Endothelial cell of umbilical vein (primary cell): ENCODE measurements at regions of chr6 and their contacts with region 1.

Region 1: DNA sequence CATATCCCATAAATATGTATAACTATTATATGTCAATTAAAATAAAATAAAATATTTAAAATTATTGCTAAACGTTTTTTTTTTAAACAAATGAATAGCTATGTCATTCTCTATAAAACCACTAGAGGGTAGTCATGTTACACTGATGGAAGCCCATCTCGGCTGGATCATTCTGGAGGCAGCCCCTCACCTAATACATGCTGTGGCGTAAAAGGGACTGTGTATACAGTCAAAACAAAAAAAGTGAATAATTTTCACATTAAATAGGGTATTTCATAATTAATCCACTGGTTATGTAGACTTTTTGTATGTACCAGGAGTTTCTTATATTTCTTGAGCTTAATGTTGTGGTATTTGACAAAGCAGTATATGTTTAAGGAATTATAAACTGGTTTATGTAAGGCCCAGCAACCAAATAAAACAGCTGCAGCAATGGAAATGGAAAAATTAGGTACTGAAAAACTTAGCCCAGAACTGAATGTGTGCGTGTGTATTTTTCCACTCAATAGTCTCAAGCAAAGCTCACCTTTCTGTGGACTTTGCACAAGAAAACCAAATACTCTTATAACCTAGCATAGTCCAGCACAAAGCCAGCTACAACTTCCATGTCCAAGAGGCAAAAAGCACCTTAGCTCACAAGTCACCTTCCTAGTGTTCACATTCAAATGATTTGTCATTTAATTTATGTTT is 81.7 kb downstream of the COL9A1 start:
- DNase-seq: peak; percentile 32
- H3K4me3 ChIP-seq: no peak overlapping the region
- H3K27ac ChIP-seq: no peak overlapping the region
- H3K4me1 ChIP-seq: no peaks in the 10 kb centered on the region
- H3K27me3 ChIP-seq: no peaks in the 10 kb centered on the region
- CTCF ChIP-seq: peak; percentile 32 to 35
- POLR2A ChIP-seq: no peak

Region 2: GRCh38 chr6:70210462-70210861 is 10.7 kb before region 1 on chr6:
- CTCF ChIA-PET with region 1: interaction called, 21 read pairs
- POLR2A ChIA-PET with region 1: no interaction called
- dilution Hi-C with region 1: no loop called
- intact Hi-C with region 1: no loop called
- DNase-seq: no peak
- H3K4me3 ChIP-seq: no peak overlapping the region
- H3K27ac ChIP-seq: no peak overlapping the region
- H3K4me1 ChIP-seq: no peaks in the 10 kb centered on the region
- H3K27me3 ChIP-seq: no peaks in the 10 kb centered on the region
- CTCF ChIP-seq: no peak
- POLR2A ChIP-seq: no peak

Region 3: GRCh38 chr6:70231311-70231710 is 10.1 kb after region 1 on chr6:
- CTCF ChIA-PET with region 1: interaction called, 65 read pairs
- POLR2A ChIA-PET with region 1: no interaction called
- dilution Hi-C with region 1: no loop called
- intact Hi-C with region 1: no loop called
- DNase-seq: no peak
- H3K4me3 ChIP-seq: no peak overlapping the region
- H3K27ac ChIP-seq: no peak overlapping the region
- H3K4me1 ChIP-seq: no peaks in the 10 kb centered on the region
- H3K27me3 ChIP-seq: no peaks in the 10 kb centered on the region
- CTCF ChIP-seq: no peak
- POLR2A ChIP-seq: no peak

Region 4: GRCh38 chr6:70241991-70242420 is 20.8 kb after region 1 on chr6:
- CTCF ChIA-PET with region 1: interaction called, 16 read pairs
- POLR2A ChIA-PET with region 1: no interaction called
- dilution Hi-C with region 1: no loop called
- intact Hi-C with region 1: no loop called
- DNase-seq: no peak
- H3K4me3 ChIP-seq: no peak overlapping the region
- H3K27ac ChIP-seq: no peak overlapping the region
- H3K4me1 ChIP-seq: no peaks in the 10 kb centered on the region
- H3K27me3 ChIP-seq: no peaks in the 10 kb centered on the region
- CTCF ChIP-seq: no peak
- POLR2A ChIP-seq: no peak

Region 5: DNA sequence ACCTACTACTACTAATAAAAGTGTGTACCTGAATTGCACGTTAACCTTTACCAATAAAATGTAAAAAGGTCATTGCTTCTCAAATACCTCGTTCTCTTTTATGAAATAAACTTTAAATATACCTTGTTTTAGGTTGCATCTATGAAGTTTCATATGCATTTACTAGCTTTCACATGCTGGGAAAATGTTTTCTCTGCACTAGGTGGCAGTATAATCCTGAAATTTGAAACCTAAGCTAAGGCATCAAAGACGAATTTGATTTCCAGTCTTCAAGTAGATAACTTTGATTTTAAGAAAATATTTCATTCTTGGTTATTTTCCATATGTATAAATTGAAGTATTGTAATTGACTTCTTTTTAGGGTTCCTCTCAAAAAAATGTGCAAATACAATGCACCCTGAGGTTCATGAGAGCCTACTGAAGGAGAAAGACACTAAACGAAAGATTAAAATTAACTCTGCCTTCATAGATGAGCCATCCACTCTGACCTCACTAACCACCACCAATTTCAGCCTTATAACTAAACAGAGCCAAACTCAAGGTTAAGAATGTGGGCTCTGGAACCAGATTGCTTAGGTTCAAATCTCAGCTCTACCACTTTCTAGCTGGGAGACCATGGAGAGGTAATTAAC is 89.0 kb after region 1 on chr6:
- CTCF ChIA-PET with region 1: interaction called, 18 read pairs
- POLR2A ChIA-PET with region 1: no interaction called
- dilution Hi-C with region 1: no loop called
- intact Hi-C with region 1: no loop called
- DNase-seq: peak; percentile 54
- H3K4me3 ChIP-seq: no peak overlapping the region
- H3K27ac ChIP-seq: no peak overlapping the region
- H3K4me1 ChIP-seq: no peaks in the 10 kb centered on the region
- H3K27me3 ChIP-seq: peaks cover 0 to 5% of the 10 kb centered on the region in 2 experiments
- CTCF ChIP-seq: peak; percentile 25 to 33
- POLR2A ChIP-seq: no peak

Region 6: DNA sequence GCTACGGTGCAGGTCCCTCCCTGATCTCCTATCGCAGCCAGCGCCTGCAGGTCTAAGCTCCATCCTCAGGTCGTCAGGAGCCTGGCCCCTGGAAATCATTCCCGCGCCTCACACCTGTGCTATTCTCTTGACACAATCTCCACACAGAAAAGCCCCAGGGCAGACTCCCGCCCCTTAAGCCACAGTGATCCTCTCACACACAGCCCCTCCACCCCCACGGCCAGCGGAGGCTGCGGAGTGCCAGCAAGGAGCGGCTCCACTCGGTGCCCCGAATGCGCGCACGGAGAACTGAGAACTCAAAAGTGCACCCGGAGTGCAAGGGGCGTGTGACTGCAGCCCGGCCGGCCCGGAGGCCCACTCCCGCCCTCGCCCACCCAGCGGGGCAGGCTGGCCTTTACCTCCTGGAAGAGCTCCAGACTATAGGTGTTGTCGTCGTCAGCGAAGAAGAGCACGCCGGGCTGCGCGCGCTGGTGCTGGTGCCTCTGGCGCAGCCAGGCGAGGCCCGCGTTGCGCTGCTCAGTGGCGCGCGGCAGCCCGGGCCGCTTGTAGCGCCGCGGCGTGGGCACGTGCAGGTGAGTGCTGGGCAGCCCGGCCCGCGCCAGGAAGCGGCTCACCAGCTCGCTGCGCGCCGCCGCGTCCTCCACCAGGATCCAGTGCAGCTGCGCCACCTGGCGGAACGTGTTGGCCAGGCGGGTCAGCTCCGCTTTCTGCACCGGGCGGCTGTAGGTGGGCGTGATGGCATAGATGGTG is 734.4 kb after region 1 on chr6:
- CTCF ChIA-PET with region 1: interaction called, 57 read pairs
- POLR2A ChIA-PET with region 1: no interaction called
- dilution Hi-C with region 1: no loop called
- intact Hi-C with region 1: loop called (anchors 2 kb)
- DNase-seq: peak; percentile 65
- H3K4me3 ChIP-seq: peak overlapping the region in 2 of 3 experiments; percentile 13 to 31
- H3K27ac ChIP-seq: no peak overlapping the region
- H3K4me1 ChIP-seq: peaks cover 14% of the 10 kb centered on the region
- H3K27me3 ChIP-seq: peaks cover 36 to 72% of the 10 kb centered on the region in 2 experiments
- CTCF ChIP-seq: peak; percentile 84 to 94
- POLR2A ChIP-seq: no peak

Region 7: GRCh38 chr6:71012866-71013469 is 791.8 kb after region 1 on chr6:
- CTCF ChIA-PET with region 1: interaction called, 26 read pairs
- POLR2A ChIA-PET with region 1: no interaction called
- dilution Hi-C with region 1: no loop called
- intact Hi-C with region 1: loop called (anchors 2 kb)
- DNase-seq: peak; percentile 39
- H3K4me3 ChIP-seq: no peak overlapping the region
- H3K27ac ChIP-seq: no peak overlapping the region
- H3K4me1 ChIP-seq: no peaks in the 10 kb centered on the region
- H3K27me3 ChIP-seq: no peaks in the 10 kb centered on the region
- CTCF ChIP-seq: peak; percentile 69 to 71
- POLR2A ChIP-seq: no peak